AG04449 (cell line): ENCODE measurements at regions of chr10 and their contacts with region 1.

Region 1: GRCh38 chr10:32256613-32257437 is 90.1 kb downstream of the EPC1 start:
- DNase-seq: no peak
- H3K4me3 ChIP-seq: no peak overlapping the region
- CTCF ChIP-seq: peak; percentile 78

Region 2: GRCh38 chr10:32244421-32245207 is 12.2 kb before region 1 on chr10:
- CTCF ChIA-PET with region 1: interaction called, 70 read pairs
- POLR2A ChIA-PET with region 1: no interaction called
- DNase-seq: no peak
- H3K4me3 ChIP-seq: no peak overlapping the region
- CTCF ChIP-seq: no peak

Region 3: GRCh38 chr10:32266979-32267378 is 10.2 kb after region 1 on chr10:
- CTCF ChIA-PET with region 1: interaction called, 55 read pairs
- POLR2A ChIA-PET with region 1: no interaction called
- DNase-seq: no peak
- H3K4me3 ChIP-seq: no peak overlapping the region
- CTCF ChIP-seq: no peak

Region 4: GRCh38 chr10:32367793-32368453 is 111.1 kb after region 1 on chr10:
- CTCF ChIA-PET with region 1: interaction called, 44 read pairs
- POLR2A ChIA-PET with region 1: no interaction called
- DNase-seq: no peak
- H3K4me3 ChIP-seq: no peak overlapping the region
- CTCF ChIP-seq: peak; percentile 67

Region 5: DNA sequence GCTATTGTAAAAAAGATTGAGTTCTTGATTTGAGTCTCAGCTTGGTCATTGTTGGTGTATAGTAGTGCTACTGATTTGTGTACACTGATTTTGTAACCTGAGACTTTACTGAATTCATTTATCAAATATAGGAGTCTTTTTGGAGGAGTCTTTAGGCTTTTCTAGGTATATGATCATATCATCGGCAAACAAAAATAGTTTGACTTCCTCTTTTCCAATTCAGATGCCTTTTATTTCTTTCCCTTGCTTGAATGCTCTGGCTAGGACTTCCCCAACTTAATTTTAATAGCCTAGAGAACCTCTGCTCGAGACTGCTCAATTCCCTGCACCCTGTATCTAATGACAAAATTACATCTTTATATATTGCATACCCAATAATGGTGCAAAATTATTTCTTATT is 343.5 kb after region 1 on chr10:
- CTCF ChIA-PET with region 1: no interaction called
- POLR2A ChIA-PET with region 1: no interaction called
- DNase-seq: no peak
- H3K4me3 ChIP-seq: no peak overlapping the region
- CTCF ChIP-seq: no peak